GM12878 (cell line): ENCODE measurements at regions of chr10 and their contacts with region 1.

Region 1: DNA sequence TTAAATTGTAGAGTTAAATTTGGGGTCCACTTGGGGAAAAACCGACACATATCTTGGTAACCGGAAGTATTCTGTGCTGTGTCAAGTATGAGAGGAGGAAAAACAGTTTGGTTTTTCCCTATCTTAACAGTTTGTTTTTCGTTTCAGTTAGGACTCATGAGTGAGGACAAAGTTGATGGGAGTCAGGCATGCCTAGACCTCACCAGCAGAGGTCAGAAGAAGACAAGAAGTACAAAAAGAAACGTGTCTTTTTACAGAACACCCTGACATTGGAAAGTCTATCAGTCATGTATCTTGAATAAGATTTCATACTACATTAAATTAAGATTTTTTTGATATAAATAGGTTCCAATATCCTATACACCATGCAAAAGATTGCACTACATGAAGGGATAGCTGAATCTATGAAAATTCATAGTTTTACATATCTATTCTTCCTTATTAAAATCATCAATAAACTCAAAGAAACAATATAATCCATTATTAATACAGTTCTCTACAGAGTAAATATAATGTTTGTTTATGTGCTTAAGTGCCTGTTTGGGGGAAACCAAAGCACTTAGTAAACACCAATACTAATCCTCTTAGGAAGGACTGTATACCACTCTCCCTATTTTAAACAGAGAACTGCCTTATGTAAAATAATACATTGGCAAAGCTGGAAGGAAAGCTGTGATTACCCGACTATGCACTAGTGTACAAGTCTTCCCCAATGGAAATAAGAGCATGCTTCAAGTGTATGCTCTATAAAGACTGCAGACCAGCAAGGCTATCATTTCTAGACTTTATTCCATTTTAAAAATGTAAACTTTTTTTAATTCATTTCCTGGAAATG is 95.6 kb downstream of the USP6NL start:
- DNase-seq: peak; percentile 67
- ATAC-seq: peak; percentile 86
- H3K4me3 ChIP-seq: peak overlapping the region; percentile 38; the same call in 1 of the 2 replicates
- H3K27ac ChIP-seq: peak overlapping the region; percentile 80
- H3K4me1 ChIP-seq: peaks cover 24% of the 10 kb centered on the region
- H3K27me3 ChIP-seq: no peaks in the 10 kb centered on the region
- CTCF ChIP-seq: peak; percentile 85 to 93 (median 88); a peak in 5 of 6 replicates
- EP300 ChIP-seq: no peak
- POLR2A ChIP-seq: no peak
- RAD21 ChIP-seq: peak; percentile 97

Region 2: GRCh38 chr10:10745291-10745690 is 770.5 kb before region 1 on chr10:
- CTCF ChIA-PET with region 1: no interaction called
- POLR2A ChIA-PET with region 1: no interaction called
- RAD21 ChIA-PET with region 1: no interaction called
- SMC1A ChIA-PET with region 1: no interaction called
- in situ Hi-C with region 1: no loop called
- intact Hi-C with region 1: no loop called
- DNase-seq: no peak
- ATAC-seq: no peak
- H3K4me3 ChIP-seq: no peak overlapping the region
- H3K27ac ChIP-seq: no peak overlapping the region
- H3K4me1 ChIP-seq: no peaks in the 10 kb centered on the region
- H3K27me3 ChIP-seq: no peaks in the 10 kb centered on the region
- CTCF ChIP-seq: no peak
- EP300 ChIP-seq: no peak
- POLR2A ChIP-seq: no peak
- RAD21 ChIP-seq: no peak

Region 3: GRCh38 chr10:11533328-11533781 is 17.5 kb after region 1 on chr10:
- CTCF ChIA-PET with region 1: interaction called, 12 read pairs
- POLR2A ChIA-PET with region 1: interaction called, 4 read pairs
- RAD21 ChIA-PET with region 1: interaction called, 9 read pairs
- SMC1A ChIA-PET with region 1: interaction called, 6 read pairs
- in situ Hi-C with region 1: no loop called
- intact Hi-C with region 1: no loop called
- DNase-seq: no peak
- ATAC-seq: peak; percentile 27
- H3K4me3 ChIP-seq: 0 out of 2 replicates have a peak overlapping the region, but pooled peaks have one; percentile 0
- H3K27ac ChIP-seq: peak overlapping the region; percentile 90
- H3K4me1 ChIP-seq: peaks cover 44% of the 10 kb centered on the region
- H3K27me3 ChIP-seq: no peaks in the 10 kb centered on the region
- CTCF ChIP-seq: peak in 1 of 3 experiments; percentile 35; a peak in 1 of 6 replicates
- EP300 ChIP-seq: no peak
- POLR2A ChIP-seq: no peak
- RAD21 ChIP-seq: no peak

Region 4: GRCh38 chr10:11602919-11603523 is 87.2 kb after region 1 on chr10:
- CTCF ChIA-PET with region 1: interaction called, 10 read pairs
- POLR2A ChIA-PET with region 1: no interaction called
- RAD21 ChIA-PET with region 1: interaction called, 8 read pairs
- SMC1A ChIA-PET with region 1: interaction called, 20 read pairs
- in situ Hi-C with region 1: no loop called
- intact Hi-C with region 1: loop called (anchors 2 kb)
- DNase-seq: peak; percentile 67
- ATAC-seq: peak; percentile 62
- H3K4me3 ChIP-seq: peak overlapping the region; percentile 54
- H3K27ac ChIP-seq: peak overlapping the region; percentile 64
- H3K4me1 ChIP-seq: peaks cover 45% of the 10 kb centered on the region
- H3K27me3 ChIP-seq: no peaks in the 10 kb centered on the region
- CTCF ChIP-seq: no peak
- EP300 ChIP-seq: peak; percentile 51 to 59; a peak in 2 of 4 replicates
- POLR2A ChIP-seq: no peak
- RAD21 ChIP-seq: no peak

Region 5: GRCh38 chr10:11684717-11685645 is 169.2 kb after region 1 on chr10:
- CTCF ChIA-PET with region 1: interaction called, 3 read pairs
- POLR2A ChIA-PET with region 1: interaction called, 3 read pairs
- RAD21 ChIA-PET with region 1: interaction called, 6 read pairs
- SMC1A ChIA-PET with region 1: interaction called, 7 read pairs
- in situ Hi-C with region 1: no loop called
- intact Hi-C with region 1: loop called (anchors 2 kb)
- DNase-seq: peak; percentile 94
- ATAC-seq: peak; percentile 83
- H3K4me3 ChIP-seq: peak overlapping the region; percentile 58
- H3K27ac ChIP-seq: peak overlapping the region; percentile 100
- H3K4me1 ChIP-seq: peaks cover 51% of the 10 kb centered on the region
- H3K27me3 ChIP-seq: no peaks in the 10 kb centered on the region
- CTCF ChIP-seq: no peak
- EP300 ChIP-seq: peak; percentile 66 to 68; a peak in 2 of 4 replicates
- POLR2A ChIP-seq: peak; percentile 79
- RAD21 ChIP-seq: peak; percentile 29

Region 6: DNA sequence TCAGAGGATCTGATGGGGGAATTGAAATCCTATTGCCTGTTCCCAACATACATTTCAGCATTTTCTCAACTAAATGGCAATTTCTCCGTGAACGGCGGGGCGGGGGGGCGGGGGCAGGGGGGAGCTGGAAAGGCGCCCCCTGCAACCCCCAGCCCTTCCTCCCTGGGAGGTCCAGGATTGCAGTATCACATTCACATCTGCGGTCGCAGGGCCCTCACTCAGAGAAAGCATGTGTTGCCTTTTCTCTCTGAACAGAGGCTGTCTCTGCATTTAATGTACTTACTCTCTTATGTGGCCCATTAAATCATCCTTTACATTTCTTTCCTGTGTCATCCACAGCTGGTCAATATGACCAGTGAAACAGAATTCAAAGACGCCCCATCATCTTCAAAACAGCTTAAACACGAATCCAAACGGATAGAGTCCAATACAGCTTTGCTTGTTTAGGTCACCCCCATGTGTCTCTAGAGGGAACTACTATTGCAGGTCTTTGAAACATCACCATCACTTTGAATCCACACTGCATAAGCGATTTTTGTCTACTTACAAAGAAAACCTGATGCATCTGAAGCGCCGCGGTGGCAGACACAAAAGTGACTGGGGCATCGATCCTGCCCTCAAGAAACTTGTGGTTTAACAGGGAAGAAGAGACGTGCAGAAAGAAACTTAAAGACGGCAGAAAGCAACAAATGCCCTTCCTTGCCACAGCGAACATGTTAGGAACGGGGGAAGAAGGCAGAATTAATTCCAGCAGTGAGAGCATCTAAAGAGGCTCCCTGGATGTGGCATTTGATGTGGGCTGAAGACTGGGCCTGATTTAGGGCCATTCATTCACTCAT is 209.3 kb after region 1 on chr10:
- CTCF ChIA-PET with region 1: interaction called, 100 read pairs
- POLR2A ChIA-PET with region 1: no interaction called
- RAD21 ChIA-PET with region 1: interaction called, 45 read pairs
- SMC1A ChIA-PET with region 1: interaction called, 67 read pairs
- in situ Hi-C with region 1: loop called (anchors 5 kb)
- intact Hi-C with region 1: loop called (anchors 1 kb)
- DNase-seq: peak; percentile 60
- ATAC-seq: peak; percentile 98
- H3K4me3 ChIP-seq: no peak overlapping the region
- H3K27ac ChIP-seq: no peak overlapping the region
- H3K4me1 ChIP-seq: peaks cover 3% of the 10 kb centered on the region
- H3K27me3 ChIP-seq: no peaks in the 10 kb centered on the region; a peak in 2 of 4 replicates
- CTCF ChIP-seq: peak; percentile 81 to 92 (median 90)
- EP300 ChIP-seq: no peak
- POLR2A ChIP-seq: no peak
- RAD21 ChIP-seq: peak; percentile 100

Region 7: DNA sequence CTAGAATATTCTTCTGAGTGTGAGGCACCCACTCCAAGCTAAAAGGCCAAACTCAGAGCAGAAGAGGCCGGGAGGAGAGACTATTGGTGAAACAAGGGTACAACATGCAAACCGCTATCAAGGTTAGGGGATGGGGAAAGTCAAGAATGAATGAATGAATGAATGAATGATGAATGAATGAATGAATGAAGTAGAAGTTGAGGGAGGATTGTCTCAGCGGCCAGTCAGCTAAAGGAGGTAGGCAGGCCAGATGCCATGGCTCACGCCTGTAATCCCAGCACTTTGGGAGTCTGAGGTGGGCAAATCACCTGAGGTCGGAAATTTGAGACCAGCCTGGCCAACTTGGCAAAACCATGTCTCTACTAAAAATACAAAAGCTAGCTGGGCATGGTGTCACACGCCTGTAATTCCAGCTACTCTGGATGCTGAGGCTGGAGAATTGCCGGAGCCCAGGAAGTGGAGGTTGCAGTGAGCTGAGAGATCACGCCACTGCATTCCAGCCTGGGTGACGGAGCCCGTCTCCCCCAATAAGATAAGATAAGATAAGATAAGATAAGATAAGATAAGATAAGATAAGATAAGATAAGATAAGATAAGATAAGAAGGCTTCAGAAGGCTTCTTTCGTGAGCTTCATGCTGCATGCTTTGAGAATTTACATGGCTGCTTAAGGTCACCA is 1234.8 kb after region 1 on chr10:
- CTCF ChIA-PET with region 1: no interaction called
- POLR2A ChIA-PET with region 1: no interaction called
- RAD21 ChIA-PET with region 1: no interaction called
- SMC1A ChIA-PET with region 1: no interaction called
- in situ Hi-C with region 1: no loop called
- intact Hi-C with region 1: no loop called
- DNase-seq: no peak
- ATAC-seq: no peak
- H3K4me3 ChIP-seq: no peak overlapping the region
- H3K27ac ChIP-seq: no peak overlapping the region
- H3K4me1 ChIP-seq: no peaks in the 10 kb centered on the region
- H3K27me3 ChIP-seq: no peaks in the 10 kb centered on the region
- CTCF ChIP-seq: no peak
- EP300 ChIP-seq: no peak
- POLR2A ChIP-seq: no peak
- RAD21 ChIP-seq: no peak